ENCODE measurements at regions of chrX and their contacts with region 1.

Region 1: GRCh38 chrX:21745756-21746155 is 12.2 kb downstream of the SMPX start:
- DNase-seq: peak; percentile 25
- ATAC-seq: peak; percentile 57
- H3K4me3 ChIP-seq: no peak overlapping the region
- H3K27ac ChIP-seq: no peak overlapping the region
- H3K4me1 ChIP-seq: no peaks in the 10 kb centered on the region
- H3K27me3 ChIP-seq: peaks cover 6% of the 10 kb centered on the region; the same call in 1 of the 2 replicates
- CTCF ChIP-seq: peak; percentile 49
- POLR2A ChIP-seq: no peak
- RAD21 ChIP-seq: peak; percentile 48

Region 2: DNA sequence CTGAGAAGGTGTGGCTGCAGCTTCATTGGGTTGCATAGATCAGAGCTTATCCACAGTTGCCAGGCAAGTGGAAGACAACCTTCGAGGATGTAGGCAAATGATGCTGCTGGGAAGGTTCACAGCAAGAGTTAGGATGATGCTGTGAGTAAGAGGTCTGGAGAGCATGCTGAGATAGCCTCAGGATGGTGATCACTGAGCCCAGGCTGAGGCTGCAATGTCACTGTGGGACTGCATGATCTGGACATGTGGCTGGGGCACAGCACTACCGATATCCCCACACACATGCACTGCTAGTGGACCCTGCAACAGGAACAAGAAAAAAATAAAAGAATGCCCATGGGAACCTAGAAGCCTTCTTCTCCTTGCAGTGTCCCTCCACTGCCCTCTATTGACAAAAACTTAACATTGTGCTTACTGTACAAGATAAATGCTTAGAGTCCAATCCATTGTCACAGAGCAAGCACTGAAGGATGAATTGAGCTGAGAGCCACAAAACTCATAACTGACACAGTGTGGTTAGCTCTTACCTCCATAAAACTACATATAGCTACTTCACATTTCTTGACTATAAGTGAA is 266.0 kb before region 1 on chrX:
- CTCF ChIA-PET with region 1: no interaction called
- POLR2A ChIA-PET with region 1: no interaction called
- dilution Hi-C with region 1: no loop called
- in situ Hi-C with region 1: no loop called
- intact Hi-C with region 1: loop called (anchors 10 kb)
- DNase-seq: peak; percentile 54
- ATAC-seq: peak; percentile 84
- H3K4me3 ChIP-seq: no peak overlapping the region
- H3K27ac ChIP-seq: no peak overlapping the region
- H3K4me1 ChIP-seq: no peaks in the 10 kb centered on the region
- H3K27me3 ChIP-seq: no peaks in the 10 kb centered on the region
- CTCF ChIP-seq: peak; percentile 69
- POLR2A ChIP-seq: no peak
- RAD21 ChIP-seq: peak; percentile 71